ENCODE measurements at regions of chr11 and their contacts with region 1.

Region 1: GRCh38 chr11:120172054-120172911 is 34.4 kb upstream of the TRIM29 start:
- DNase-seq: peak; percentile 71
- H3K4me3 Mint-ChIP-seq: no peak overlapping the region
- H3K27ac Mint-ChIP-seq: no peak overlapping the region
- H3K4me1 Mint-ChIP-seq: peaks cover 4% of the 10 kb centered on the region
- H3K27me3 Mint-ChIP-seq: peaks cover 50% of the 10 kb centered on the region

Region 2: DNA sequence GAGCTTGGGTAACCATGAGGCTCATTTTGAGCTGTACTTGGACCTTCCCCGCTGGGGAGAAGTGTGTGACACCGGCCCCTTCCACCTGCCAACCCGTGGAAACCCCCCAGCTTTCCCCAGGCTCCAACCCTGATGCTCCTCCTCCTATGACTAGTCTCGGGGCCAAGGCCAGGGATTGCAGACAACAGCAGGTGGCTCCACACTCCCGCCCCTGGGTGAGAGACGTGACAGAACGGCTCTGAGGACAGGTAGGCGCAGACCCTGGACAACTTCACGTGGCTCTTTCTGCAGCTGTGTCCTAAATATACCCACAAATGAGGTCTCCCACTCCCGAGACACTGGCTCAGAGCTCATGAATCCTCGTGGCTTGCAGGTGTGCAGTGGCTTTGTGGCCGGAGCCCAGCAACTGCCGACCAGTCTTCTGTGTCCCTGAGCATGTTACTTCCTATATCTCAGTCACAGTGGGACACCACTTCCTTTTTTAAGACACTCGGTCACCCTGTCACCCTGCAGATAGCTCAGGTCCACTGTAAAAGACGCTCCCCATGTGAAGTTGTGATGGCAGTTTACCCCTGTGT is 498.4 kb before region 1 on chr11:
- CTCF ChIA-PET with region 1: no interaction called
- intact Hi-C with region 1: loop called (anchors 2 kb)
- DNase-seq: peak; percentile 87
- H3K4me3 Mint-ChIP-seq: no peak overlapping the region
- H3K27ac Mint-ChIP-seq: no peak overlapping the region
- H3K4me1 Mint-ChIP-seq: peaks cover 9% of the 10 kb centered on the region
- H3K27me3 Mint-ChIP-seq: no peaks in the 10 kb centered on the region

Region 3: GRCh38 chr11:120210626-120211521 is 38.6 kb after region 1 on chr11 and contains the start of gene OAF:
- CTCF ChIA-PET with region 1: no interaction called
- intact Hi-C with region 1: loop called (anchors 5 kb)
- DNase-seq: peak; percentile 59
- H3K4me3 Mint-ChIP-seq: peak within 1 kb of the TSS; percentile 83
- H3K27ac Mint-ChIP-seq: peak within 1 kb of the TSS; percentile 44
- H3K4me1 Mint-ChIP-seq: peaks cover 5% of the 10 kb centered on the region
- H3K27me3 Mint-ChIP-seq: peaks cover 10% of the 10 kb centered on the region
- total RNA-seq, gene OAF: 1.5 to 1.6 TPM

Region 4: DNA sequence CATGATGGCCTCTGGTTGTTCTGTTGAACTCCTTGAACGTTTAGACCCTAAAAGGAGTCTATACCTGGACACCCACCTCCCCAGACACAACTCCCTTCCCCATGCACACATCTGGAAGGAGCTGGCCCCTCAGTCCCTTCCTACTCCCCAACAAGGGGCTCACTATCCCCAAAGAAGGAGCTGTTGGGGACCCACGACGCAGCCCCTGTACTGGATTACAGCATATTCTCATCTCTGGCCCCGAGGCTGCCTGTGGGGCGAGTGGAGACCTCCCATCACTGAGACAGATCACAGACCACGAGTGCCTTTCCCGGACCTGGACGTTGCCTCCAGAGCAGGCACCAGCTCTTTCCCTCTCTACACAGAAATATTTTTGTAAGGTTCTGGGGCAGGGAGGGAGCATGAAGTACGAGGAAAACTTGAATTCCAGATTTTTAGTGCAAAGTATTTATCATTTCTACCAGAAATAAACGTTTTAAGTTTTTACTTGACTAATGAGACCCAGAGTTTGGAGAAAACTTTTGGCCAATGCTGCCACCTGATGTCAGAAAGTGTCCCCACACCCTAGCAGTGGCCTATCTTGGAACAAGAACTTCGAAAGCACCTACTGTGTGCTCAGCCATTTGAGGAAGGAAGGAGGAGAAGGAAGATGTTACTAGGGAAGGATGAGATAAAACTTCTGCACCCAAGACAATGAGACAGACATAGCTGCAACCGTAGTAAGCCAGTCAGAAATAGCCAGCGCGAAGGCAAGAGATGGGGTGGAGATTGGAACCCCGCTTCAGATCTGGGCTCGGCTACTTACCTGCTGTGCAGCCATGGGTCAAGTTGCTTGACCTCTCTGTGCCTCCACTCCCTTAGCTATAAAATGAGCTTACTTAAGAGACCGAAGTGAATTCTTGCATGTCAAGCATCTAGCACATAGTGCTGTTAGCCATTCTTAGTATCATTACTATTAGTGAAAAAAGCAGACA is 57.5 kb after region 1 on chr11:
- CTCF ChIA-PET with region 1: interaction called, 47 read pairs
- intact Hi-C with region 1: loop called (anchors 1 kb)
- DNase-seq: peak; percentile 59
- H3K4me3 Mint-ChIP-seq: no peak overlapping the region
- H3K27ac Mint-ChIP-seq: no peak overlapping the region
- H3K4me1 Mint-ChIP-seq: no peaks in the 10 kb centered on the region
- H3K27me3 Mint-ChIP-seq: peaks cover 8% of the 10 kb centered on the region

Region 5: DNA sequence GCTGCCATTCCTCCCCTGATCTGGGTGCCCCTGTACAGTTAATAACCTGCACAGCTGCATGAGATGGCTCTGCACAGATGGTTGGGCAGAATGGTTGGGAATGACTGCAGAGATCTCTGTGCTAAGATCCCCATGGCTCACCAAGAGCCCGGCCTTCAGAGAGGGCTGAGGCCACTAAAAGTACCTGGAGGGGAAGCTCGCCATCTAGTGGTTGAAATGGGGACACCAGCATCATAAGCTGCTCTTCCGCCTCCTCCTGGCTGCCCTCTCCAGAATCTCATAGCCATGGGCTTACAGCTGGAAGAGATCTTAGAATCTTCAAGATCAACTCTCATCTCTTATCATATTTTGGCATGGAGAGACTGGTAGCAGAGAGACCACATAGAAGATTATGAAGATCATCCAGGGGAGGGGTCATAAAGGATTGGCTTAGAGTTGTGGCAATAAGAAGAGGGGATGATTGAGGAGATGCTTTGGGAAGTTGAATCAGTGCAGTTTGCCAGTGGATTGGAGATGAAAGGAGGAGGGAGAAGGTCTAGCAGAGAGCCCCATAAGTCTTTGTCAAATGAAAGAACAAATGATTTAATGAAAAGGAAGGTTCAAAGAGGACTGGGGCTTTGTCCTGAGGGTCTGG is 130.8 kb after region 1 on chr11:
- CTCF ChIA-PET with region 1: interaction called, 5 read pairs
- intact Hi-C with region 1: loop called (anchors 1 kb)
- DNase-seq: peak; percentile 74
- H3K4me3 Mint-ChIP-seq: no peak overlapping the region
- H3K27ac Mint-ChIP-seq: no peak overlapping the region
- H3K4me1 Mint-ChIP-seq: no peaks in the 10 kb centered on the region
- H3K27me3 Mint-ChIP-seq: peaks cover 18% of the 10 kb centered on the region